ENCODE measurements at regions of chr10 and their contacts with region 1.

Region 1: DNA sequence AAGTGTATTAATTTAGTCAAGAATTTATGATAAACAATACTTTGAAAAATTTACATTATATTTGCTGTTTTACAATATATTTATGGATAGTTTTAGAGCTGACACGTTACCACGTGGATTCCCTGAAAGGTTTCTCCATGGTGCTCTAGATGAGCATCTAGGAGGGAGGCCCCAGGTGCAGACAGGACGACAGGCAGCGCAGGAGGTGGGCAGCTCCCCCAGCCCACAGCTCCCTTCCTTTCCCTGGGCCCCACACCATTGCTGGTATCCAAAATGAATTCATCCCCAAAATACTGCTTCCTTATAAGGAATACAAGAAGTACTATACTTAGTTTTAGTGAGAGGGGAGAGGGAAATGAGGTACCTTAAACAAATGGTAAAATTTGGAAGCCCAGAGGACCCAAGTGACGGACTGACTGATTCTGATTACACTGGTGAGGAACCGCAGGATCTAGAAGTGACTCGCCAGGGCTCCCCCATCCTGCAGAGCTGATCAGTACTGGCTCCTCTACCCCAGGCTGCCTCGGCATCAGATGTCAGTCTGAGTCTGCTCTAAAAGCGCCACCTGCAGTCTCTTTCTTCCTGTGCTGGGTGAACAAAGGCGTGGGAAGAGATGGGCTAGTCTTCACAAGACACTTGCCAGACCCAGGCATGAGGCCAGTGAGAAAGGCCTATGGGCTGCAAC is 89.2 kb downstream of the DLG5 start:
- DNase-seq: peak; percentile 67 to 80 (median 75)
- H3K4me3 ChIP-seq: no peak overlapping the region
- H3K4me3 Mint-ChIP-seq: peak overlapping the region in 7 of 8 donors; percentile 31 to 71 (median 57)
- H3K27ac ChIP-seq: peak overlapping the region; percentile 59
- H3K27ac Mint-ChIP-seq: peak overlapping the region; percentile 81 to 93 (median 90)
- H3K4me1 ChIP-seq: peaks cover 36% of the 10 kb centered on the region
- H3K4me1 Mint-ChIP-seq: peaks cover 19 to 48% (median 30%) of the 10 kb centered on the region in 4 donors
- H3K27me3 ChIP-seq: no peaks in the 10 kb centered on the region
- H3K27me3 Mint-ChIP-seq: no peaks in the 10 kb centered on the region

Region 2: DNA sequence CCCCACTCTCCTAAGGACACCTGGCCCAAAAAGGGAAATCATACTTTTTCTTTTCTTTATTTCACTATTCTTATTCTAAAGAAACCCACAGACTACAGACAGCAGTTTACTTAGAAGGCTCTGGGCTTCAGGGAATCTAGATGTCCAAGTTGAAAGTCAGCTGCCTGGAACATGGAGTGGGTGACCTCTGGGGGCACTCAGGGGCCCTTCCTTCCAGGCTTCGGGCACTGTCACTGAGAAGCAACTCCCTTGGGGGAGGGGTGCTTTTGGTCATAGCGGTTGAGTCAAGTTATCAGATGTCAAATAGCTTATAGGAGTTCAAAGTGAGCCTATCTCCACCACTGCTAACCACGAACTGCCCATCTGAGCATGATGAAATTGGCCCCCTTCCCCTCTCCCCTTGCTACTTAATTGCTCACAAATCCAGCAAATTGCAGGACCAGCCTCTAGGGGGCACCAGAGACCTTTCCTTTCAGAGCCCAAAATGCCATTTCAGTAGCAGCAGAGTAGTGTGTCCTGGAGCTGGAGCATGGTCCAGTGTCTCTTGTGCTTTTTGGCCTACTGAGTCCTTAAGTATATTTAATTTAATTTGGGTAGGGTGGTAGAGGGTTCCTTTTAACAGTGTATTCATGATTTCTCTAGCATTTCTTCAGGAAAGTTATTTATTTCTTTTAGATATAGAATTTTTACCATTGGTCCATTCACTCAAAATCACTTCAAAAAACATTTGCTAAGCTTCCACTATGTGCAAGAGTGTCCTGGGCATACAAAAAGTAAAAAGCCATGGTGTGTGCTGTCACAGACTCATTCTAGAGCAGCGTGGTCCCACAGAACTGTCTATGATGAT is 663.5 kb before region 1 on chr10:
- CTCF ChIA-PET with region 1: no interaction called
- POLR2A ChIA-PET with region 1: no interaction called
- intact Hi-C with region 1: loop called (anchors 10 kb)
- DNase-seq: peak; percentile 29 to 47 (median 39)
- H3K4me3 ChIP-seq: no peak overlapping the region
- H3K4me3 Mint-ChIP-seq: no peak overlapping the region
- H3K27ac ChIP-seq: no peak overlapping the region
- H3K27ac Mint-ChIP-seq: no peak overlapping the region
- H3K4me1 ChIP-seq: no peaks in the 10 kb centered on the region
- H3K4me1 Mint-ChIP-seq: no peaks in the 10 kb centered on the region
- H3K27me3 ChIP-seq: no peaks in the 10 kb centered on the region
- H3K27me3 Mint-ChIP-seq: peaks cover 3 to 14% of the 10 kb centered on the region in 2 donors

Region 3: GRCh38 chr10:77710759-77711682 is 126.4 kb before region 1 on chr10:
- CTCF ChIA-PET with region 1: interaction called, 282 read pairs
- POLR2A ChIA-PET with region 1: interaction called, 4 read pairs
- intact Hi-C with region 1: loop called (anchors 1 kb)
- DNase-seq: peak; percentile 43 to 69 (median 68)
- H3K4me3 ChIP-seq: no peak overlapping the region
- H3K4me3 Mint-ChIP-seq: peak overlapping the region; percentile 49 to 77 (median 67)
- H3K27ac ChIP-seq: no peak overlapping the region
- H3K27ac Mint-ChIP-seq: peak overlapping the region in 1 of 7 donors; percentile 58
- H3K4me1 ChIP-seq: peaks cover 12% of the 10 kb centered on the region
- H3K4me1 Mint-ChIP-seq: peaks cover 4 to 10% (median 7%) of the 10 kb centered on the region in 4 donors
- H3K27me3 ChIP-seq: peaks cover 3% of the 10 kb centered on the region
- H3K27me3 Mint-ChIP-seq: peaks cover 6 to 14% of the 10 kb centered on the region in 2 donors

Region 4: DNA sequence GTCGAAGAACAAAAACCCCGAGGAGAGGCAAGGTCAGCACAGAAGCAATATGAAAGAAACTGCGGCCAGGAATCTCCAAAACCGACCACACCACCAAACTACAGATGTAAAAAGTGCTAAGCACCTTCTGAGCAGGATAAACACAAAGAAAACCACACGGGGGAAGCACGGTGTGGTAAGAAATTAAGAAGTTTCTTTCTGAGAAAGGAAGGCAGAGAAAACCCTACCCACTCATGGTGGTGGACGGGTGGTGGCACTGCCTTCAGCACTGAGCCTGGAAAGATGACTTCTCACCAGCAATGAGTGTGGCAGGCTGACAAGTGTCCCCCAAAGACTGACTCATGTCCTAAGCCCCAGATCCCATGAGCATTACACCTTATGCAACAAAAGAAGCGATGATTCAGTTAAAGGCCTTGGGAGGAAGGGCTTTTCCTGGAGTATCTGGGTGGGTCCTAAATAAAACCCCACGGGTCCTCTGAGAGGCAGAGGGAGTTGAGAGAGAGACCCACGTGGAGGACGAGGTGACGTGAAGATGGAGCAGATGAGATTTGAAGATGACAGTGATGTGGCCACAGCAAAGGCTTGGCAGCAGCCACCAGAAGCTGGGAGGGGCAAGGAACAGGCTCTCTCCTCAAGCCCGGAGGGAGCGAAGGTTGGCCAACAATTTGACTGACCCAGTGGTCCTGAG is 35.8 kb before region 1 on chr10:
- CTCF ChIA-PET with region 1: interaction called, 4 read pairs
- POLR2A ChIA-PET with region 1: no interaction called
- intact Hi-C with region 1: loop called (anchors 1 kb)
- DNase-seq: peak; percentile 43 to 78 (median 64)
- H3K4me3 ChIP-seq: no peak overlapping the region
- H3K4me3 Mint-ChIP-seq: peak overlapping the region in 6 of 8 donors; percentile 11 to 58 (median 30)
- H3K27ac ChIP-seq: peak overlapping the region; percentile 46
- H3K27ac Mint-ChIP-seq: peak overlapping the region; percentile 67 to 92 (median 88)
- H3K4me1 ChIP-seq: peaks cover 16% of the 10 kb centered on the region
- H3K4me1 Mint-ChIP-seq: peaks cover 19 to 39% (median 29%) of the 10 kb centered on the region in 4 donors
- H3K27me3 ChIP-seq: no peaks in the 10 kb centered on the region
- H3K27me3 Mint-ChIP-seq: no peaks in the 10 kb centered on the region

Region 5: DNA sequence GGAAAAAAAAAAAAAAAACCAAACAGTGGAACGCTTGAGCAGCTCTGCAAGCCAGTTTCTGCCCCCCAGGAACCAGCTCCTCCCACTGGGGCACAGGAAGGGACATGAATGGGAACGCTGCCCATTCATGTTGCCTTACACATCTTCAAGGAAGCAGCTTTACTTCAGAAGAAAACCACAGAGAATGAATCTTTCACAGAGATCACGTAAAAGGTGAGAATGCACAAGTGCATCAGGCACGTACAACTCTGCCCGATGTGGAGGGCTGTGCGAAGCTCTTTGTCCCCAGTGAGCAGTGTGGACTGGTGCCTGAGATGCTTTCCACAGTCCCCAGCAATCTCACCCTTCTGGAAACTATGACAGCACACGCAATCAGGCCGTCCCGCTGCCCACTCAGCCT is 17.0 kb before region 1 on chr10:
- CTCF ChIA-PET with region 1: interaction called, 16 read pairs
- POLR2A ChIA-PET with region 1: interaction called, 5 read pairs
- intact Hi-C with region 1: no loop called
- DNase-seq: no peak
- H3K4me3 ChIP-seq: no peak overlapping the region
- H3K4me3 Mint-ChIP-seq: no peak overlapping the region
- H3K27ac ChIP-seq: no peak overlapping the region
- H3K27ac Mint-ChIP-seq: peak overlapping the region in 1 of 7 donors; percentile 73
- H3K4me1 ChIP-seq: no peaks in the 10 kb centered on the region
- H3K4me1 Mint-ChIP-seq: peaks cover 0 to 7% (median 3%) of the 10 kb centered on the region in 4 donors
- H3K27me3 ChIP-seq: no peaks in the 10 kb centered on the region
- H3K27me3 Mint-ChIP-seq: no peaks in the 10 kb centered on the region

Measured in CD4-positive, alpha-beta memory T cell (primary cell).